ENCODE measurements at regions of chr1 and their contacts with region 1.

Region 1: GRCh38 chr1:33805988-33806387 is 57.9 kb upstream of the HMGB4 start:
- DNase-seq: no peak
- H3K4me3 ChIP-seq: no peak overlapping the region
- H3K27ac ChIP-seq: no peak overlapping the region
- H3K4me1 ChIP-seq: no peaks in the 10 kb centered on the region
- H3K27me3 ChIP-seq: no peaks in the 10 kb centered on the region
- CTCF ChIP-seq: no peak
- EP300 ChIP-seq: no peak
- POLR2A ChIP-seq: no peak

Region 2: GRCh38 chr1:33768821-33769220 is 37.2 kb before region 1 on chr1:
- intact Hi-C with region 1: loop called in 1 of 4 experiments (anchors 1 kb)
- DNase-seq: no peak
- H3K4me3 ChIP-seq: no peak overlapping the region
- H3K27ac ChIP-seq: no peak overlapping the region
- H3K4me1 ChIP-seq: no peaks in the 10 kb centered on the region
- H3K27me3 ChIP-seq: no peaks in the 10 kb centered on the region
- CTCF ChIP-seq: no peak
- EP300 ChIP-seq: no peak
- POLR2A ChIP-seq: no peak